ENCODE measurements at regions of chr1 and their contacts with region 1.

Region 1: GRCh38 chr1:156114101-156114916 is at the start of gene LMNA:
- DNase-seq: peak; percentile 98
- ATAC-seq: peak; percentile 67
- H3K4me3 ChIP-seq: peak within 1 kb of the TSS; percentile 86
- H3K27ac ChIP-seq: peak within 1 kb of the TSS; percentile 91
- H3K4me1 ChIP-seq: peaks cover 38% of the 10 kb centered on the region
- H3K27me3 ChIP-seq: no peaks in the 10 kb centered on the region
- CTCF ChIP-seq: no peak
- total RNA-seq, gene LMNA: 864 and 1,095 TPM in 2 replicates

Region 2: GRCh38 chr1:155978325-155978972 is 135.9 kb before region 1 on chr1 and contains the start of gene ARHGEF2:
- CTCF ChIA-PET with region 1: no interaction called
- POLR2A ChIA-PET with region 1: no interaction called
- intact Hi-C with region 1: no loop called
- DNase-seq: peak; percentile 71
- ATAC-seq: peak; percentile 54
- H3K4me3 ChIP-seq: peak within 1 kb of the TSS; percentile 97
- H3K27ac ChIP-seq: peak within 1 kb of the TSS; percentile 57
- H3K4me1 ChIP-seq: peaks cover 52% of the 10 kb centered on the region
- H3K27me3 ChIP-seq: no peaks in the 10 kb centered on the region
- CTCF ChIP-seq: no peak; the same call in 1 of the 2 replicates
- total RNA-seq, gene ARHGEF2: 65.9 and 70.8 TPM in 2 replicates

Region 3: GRCh38 chr1:156096640-156097391 is 17.5 kb before region 1 on chr1:
- CTCF ChIA-PET with region 1: interaction called, 3 read pairs
- POLR2A ChIA-PET with region 1: interaction called, 6 read pairs
- intact Hi-C with region 1: loop called (anchors 1 kb)
- DNase-seq: peak; percentile 93
- ATAC-seq: peak; percentile 97
- H3K4me3 ChIP-seq: no peak overlapping the region
- H3K27ac ChIP-seq: peak overlapping the region; percentile 69
- H3K4me1 ChIP-seq: peaks cover 45% of the 10 kb centered on the region
- H3K27me3 ChIP-seq: no peaks in the 10 kb centered on the region
- CTCF ChIP-seq: peak; percentile 99

Region 4: DNA sequence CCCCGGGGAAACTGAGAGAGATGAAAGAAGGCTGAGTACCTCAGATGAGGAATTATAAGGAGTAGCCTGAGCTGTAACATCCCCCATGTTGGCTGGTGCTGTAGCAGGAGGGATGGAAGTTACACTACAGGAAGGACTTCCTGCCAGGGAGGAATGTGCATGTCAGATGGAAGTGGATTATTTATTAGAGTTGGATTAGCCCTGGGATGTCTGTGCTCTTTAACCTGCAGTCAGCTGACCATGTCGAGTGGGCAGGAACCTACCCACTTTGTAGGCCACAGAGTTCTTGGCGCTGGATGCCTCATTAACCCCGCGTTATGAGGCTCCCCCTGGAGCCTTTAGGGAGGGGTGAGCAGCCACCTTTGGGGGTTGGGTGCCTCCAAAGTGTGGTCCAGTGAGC is 38.3 kb after region 1 on chr1:
- CTCF ChIA-PET with region 1: no interaction called
- POLR2A ChIA-PET with region 1: no interaction called
- intact Hi-C with region 1: no loop called
- DNase-seq: no peak
- ATAC-seq: no peak
- H3K4me3 ChIP-seq: no peak overlapping the region
- H3K27ac ChIP-seq: no peak overlapping the region
- H3K4me1 ChIP-seq: peaks cover 17% of the 10 kb centered on the region
- H3K27me3 ChIP-seq: no peaks in the 10 kb centered on the region
- CTCF ChIP-seq: no peak

Region 5: GRCh38 chr1:156164125-156164831 is 50.0 kb after region 1 on chr1:
- CTCF ChIA-PET with region 1: no interaction called
- POLR2A ChIA-PET with region 1: interaction called, 10 read pairs
- intact Hi-C with region 1: no loop called
- DNase-seq: peak; percentile 44
- ATAC-seq: peak; percentile 84
- H3K4me3 ChIP-seq: no peak overlapping the region
- H3K27ac ChIP-seq: peak overlapping the region; percentile 8; the same call in 1 of the 2 replicates
- H3K4me1 ChIP-seq: peaks cover 12% of the 10 kb centered on the region
- H3K27me3 ChIP-seq: no peaks in the 10 kb centered on the region
- CTCF ChIP-seq: no peak